Esophagus muscularis mucosa (tissue), 4 donors: ENCODE measurements at regions of chr11 and their contacts with region 1.

Region 1: GRCh38 chr11:99548264-99548663 is 527.5 kb downstream of the CNTN5 start:
- DNase-seq: no peak
- H3K4me3 ChIP-seq: no peak overlapping the region
- H3K27ac ChIP-seq: no peak overlapping the region
- H3K4me1 ChIP-seq: no peaks in the 10 kb centered on the region
- H3K27me3 ChIP-seq: no peaks in the 10 kb centered on the region
- CTCF ChIP-seq: no peak
- EP300 ChIP-seq: no peak
- POLR2A ChIP-seq: no peak

Region 2: DNA sequence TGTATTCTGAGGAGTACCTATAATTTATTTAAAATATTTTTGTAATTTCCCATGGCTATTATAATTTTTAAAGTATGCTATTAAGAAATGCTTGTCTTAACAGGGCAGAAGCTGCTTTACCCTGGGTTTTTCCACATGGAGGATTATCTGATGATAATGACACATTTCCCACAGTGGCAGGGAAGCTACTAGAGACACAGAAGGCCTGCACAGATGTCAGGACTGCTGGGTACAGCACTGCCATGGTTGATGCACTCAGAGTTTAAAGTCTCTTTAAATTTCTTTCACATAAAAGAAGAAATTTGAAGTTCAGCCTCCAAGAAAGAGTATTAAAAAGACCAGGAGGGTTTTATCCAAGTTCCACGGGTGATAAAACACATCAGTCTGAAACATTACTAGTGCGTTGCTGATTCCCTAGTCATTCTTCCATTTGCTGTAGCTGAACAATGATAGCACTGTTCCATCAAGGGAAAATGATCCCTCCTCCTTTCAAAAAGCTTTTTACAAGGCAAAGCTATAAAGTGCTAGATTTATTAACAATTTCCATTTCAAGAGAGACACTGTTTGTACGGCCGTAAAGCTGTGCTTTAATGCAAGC is 164.5 kb before region 1 on chr11:
- intact Hi-C with region 1: no loop called
- DNase-seq: no peak
- H3K4me3 ChIP-seq: no peak overlapping the region
- H3K27ac ChIP-seq: no peak overlapping the region
- H3K4me1 ChIP-seq: no peaks in the 10 kb centered on the region
- H3K27me3 ChIP-seq: no peaks in the 10 kb centered on the region
- CTCF ChIP-seq: no peak
- EP300 ChIP-seq: no peak
- POLR2A ChIP-seq: no peak

Region 3: DNA sequence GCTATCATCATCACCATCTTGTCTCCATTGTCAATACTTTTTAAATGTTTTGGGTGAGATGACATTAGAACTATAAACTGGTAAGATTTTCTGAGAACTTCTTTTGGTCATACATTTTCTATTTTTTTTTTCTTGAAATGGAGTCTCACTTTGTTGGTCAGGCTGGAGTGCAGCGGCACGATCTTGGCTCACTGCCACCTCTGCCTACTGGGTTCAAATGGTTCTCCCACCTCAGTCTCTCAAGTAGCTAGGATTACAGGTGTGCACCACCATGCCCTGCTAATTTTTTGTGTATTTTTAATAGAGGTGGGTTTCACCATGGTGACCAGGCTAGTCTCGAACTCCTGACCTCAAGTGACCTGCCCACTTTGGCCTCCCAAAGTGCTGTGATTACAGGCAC is 352.9 kb after region 1 on chr11:
- intact Hi-C with region 1: no loop called
- DNase-seq: no peak
- H3K4me3 ChIP-seq: no peak overlapping the region
- H3K27ac ChIP-seq: no peak overlapping the region
- H3K4me1 ChIP-seq: no peaks in the 10 kb centered on the region
- H3K27me3 ChIP-seq: no peaks in the 10 kb centered on the region
- CTCF ChIP-seq: no peak
- EP300 ChIP-seq: no peak
- POLR2A ChIP-seq: no peak

Region 4: DNA sequence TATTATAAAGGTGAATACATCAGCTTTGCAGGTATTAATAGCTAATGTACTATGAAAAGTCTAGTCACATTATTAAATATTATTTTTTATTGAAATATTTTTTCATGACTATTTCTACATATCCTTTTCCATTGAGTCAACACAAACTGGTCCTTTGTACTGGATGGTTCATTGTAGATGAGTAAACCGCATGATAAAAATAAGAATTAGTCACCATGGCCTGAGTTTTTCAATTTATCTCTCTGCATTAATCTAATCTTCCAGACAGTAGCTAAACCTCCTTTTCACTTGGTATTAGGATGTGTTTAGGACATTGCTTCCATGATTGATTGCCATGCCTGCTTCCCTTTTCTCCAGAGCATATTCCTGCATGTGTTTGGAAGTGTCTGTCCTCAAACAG is 699.4 kb after region 1 on chr11:
- intact Hi-C with region 1: loop called (anchors 10 kb)
- DNase-seq: no peak
- H3K4me3 ChIP-seq: no peak overlapping the region
- H3K27ac ChIP-seq: no peak overlapping the region
- H3K4me1 ChIP-seq: no peaks in the 10 kb centered on the region
- H3K27me3 ChIP-seq: no peaks in the 10 kb centered on the region
- CTCF ChIP-seq: no peak
- EP300 ChIP-seq: no peak
- POLR2A ChIP-seq: no peak